ENCODE measurements at regions of chr4 and their contacts with region 1.

Region 1: DNA sequence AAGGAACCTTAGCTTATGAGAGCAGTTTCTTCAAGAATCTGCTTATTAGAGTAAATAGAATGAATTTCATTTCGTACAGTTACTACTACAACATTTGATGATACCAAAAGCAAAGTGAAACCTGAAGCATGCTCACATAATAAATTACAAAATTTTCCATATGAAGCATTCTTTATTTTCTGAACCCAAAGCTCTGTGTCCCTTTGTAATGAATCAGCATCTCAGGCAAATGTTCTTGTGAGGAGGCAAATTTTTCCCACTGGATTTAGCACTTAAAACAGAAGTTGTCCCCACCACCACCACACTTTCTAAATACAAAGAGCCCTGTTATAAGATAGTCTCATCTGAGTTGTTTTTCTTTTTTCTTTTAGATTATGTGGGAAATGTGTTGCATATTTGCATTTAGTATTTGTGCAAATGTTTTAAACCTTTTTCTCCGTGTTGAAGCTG is 70.7 kb upstream of the NFKB1 start:
- DNase-seq: no peak
- ATAC-seq: peak; percentile 4
- H3K4me3 Mint-ChIP-seq: peak overlapping the region; percentile 88
- H3K27ac Mint-ChIP-seq: peak overlapping the region; percentile 89
- H3K4me1 Mint-ChIP-seq: peaks cover 15% of the 10 kb centered on the region
- H3K27me3 Mint-ChIP-seq: peaks cover 2% of the 10 kb centered on the region

Region 2: DNA sequence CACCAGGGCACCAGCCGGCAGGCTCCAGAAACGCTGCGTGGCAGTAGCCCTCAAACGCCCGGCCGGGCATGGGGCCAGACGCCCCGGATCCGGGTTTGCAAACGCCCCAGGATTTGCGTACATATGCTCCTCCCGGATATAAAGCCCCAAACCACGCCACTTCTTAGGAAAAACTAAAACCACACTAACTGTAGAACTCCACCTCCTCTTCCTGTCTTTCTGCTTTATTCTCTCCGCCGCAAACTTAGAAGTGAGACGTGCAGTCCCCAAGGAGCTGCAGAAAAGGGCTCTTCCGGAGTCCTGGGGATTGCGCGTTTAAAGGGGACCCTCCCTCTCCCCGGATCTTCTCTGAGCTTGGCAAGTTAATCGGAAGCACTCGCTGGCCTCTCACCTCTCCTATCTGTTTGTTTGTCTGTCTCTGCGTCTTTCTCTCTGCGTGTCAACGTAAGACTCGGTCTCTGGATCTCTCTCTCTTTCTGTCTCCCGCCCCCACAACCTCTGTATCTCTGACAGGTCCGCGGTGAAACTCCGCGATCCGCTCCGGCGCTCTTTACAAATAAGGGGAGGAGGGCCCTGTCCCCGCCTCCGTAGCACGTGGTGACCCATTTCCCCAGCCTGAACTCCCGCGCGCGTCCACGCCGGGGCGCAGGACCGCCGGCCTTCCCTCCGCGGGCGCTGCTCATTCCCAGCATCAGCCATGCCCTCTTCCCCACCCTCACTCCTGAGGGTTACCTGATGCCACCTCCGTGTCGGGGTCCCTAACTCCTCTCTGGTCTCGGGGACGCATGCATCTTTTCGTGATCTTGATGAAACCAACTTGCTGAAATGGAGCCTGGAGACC is 85.3 kb before region 1 on chr4 and contains the start of gene SLC39A8:
- CTCF ChIA-PET with region 1: interaction called, 24 read pairs
- POLR2A ChIA-PET with region 1: interaction called, 9 read pairs
- DNase-seq: peak; percentile 95
- ATAC-seq: peak; percentile 84
- H3K4me3 Mint-ChIP-seq: peak within 1 kb of the TSS; percentile 82
- H3K27ac Mint-ChIP-seq: peak within 1 kb of the TSS; percentile 96
- H3K4me1 Mint-ChIP-seq: peaks cover 40% of the 10 kb centered on the region
- H3K27me3 Mint-ChIP-seq: peaks cover 7% of the 10 kb centered on the region
- total RNA-seq, gene SLC39A8: 79.6 to 83.0 TPM

Region 3: DNA sequence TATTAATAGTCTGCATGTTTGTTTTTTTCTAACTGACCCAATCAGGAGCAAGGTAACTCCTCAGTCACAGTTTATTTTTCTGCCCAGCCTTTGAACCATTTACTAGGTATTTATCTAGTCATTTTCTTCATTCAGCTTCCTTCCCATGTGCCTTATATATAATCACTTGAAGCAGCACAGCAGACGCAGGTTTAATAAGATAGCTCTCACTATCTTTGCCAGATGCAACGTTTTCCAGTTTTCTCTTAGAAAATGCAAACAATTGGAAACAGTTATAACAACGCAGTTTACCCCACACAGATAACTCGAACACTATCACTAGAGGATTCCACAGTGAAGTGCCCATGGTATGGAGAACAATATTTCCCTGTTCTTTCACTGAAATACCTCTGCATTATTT is 14.3 kb after region 1 on chr4:
- CTCF ChIA-PET with region 1: interaction called, 19 read pairs
- POLR2A ChIA-PET with region 1: no interaction called
- DNase-seq: no peak
- ATAC-seq: no peak
- H3K4me3 Mint-ChIP-seq: no peak overlapping the region
- H3K27ac Mint-ChIP-seq: no peak overlapping the region
- H3K4me1 Mint-ChIP-seq: peaks cover 22% of the 10 kb centered on the region
- H3K27me3 Mint-ChIP-seq: peaks cover 7% of the 10 kb centered on the region

Measured in activated CD8-positive, alpha-beta T cell treated with anti-CD3 and anti-CD28 coated beads, Interleukin-2, amount 10 ng/mL, durations not matched to agents 7 days and 5 days (primary cell).